Endothelial cell of umbilical vein (primary cell): ENCODE measurements at regions of chr2 and their contacts with region 1.

Region 1: GRCh38 chr2:120949027-120949956 is 213.6 kb downstream of the GLI2 start:
- DNase-seq: peak; percentile 21
- H3K4me3 ChIP-seq: no peak overlapping the region
- H3K27ac ChIP-seq: no peak overlapping the region
- H3K4me1 ChIP-seq: no peaks in the 10 kb centered on the region
- H3K27me3 ChIP-seq: peaks cover 0 to 2% of the 10 kb centered on the region in 2 experiments
- CTCF ChIP-seq: peak; percentile 17 to 51
- POLR2A ChIP-seq: no peak

Region 2: GRCh38 chr2:120735746-120736170 is 213.5 kb before region 1 on chr2 and contains the start of gene GLI2:
- CTCF ChIA-PET with region 1: no interaction called
- POLR2A ChIA-PET with region 1: no interaction called
- dilution Hi-C with region 1: no loop called
- intact Hi-C with region 1: loop called (anchors 1 kb)
- DNase-seq: peak; percentile 63
- H3K4me3 ChIP-seq: peak within 1 kb of the TSS in 1 of 3 experiments; percentile 8
- H3K27ac ChIP-seq: no peak within 1 kb of the TSS
- H3K4me1 ChIP-seq: no peaks in the 10 kb centered on the region
- H3K27me3 ChIP-seq: peaks cover 63 to 83% of the 10 kb centered on the region in 2 experiments
- CTCF ChIP-seq: peak; percentile 56 to 64
- POLR2A ChIP-seq: no peak
- total RNA-seq, gene GLI2: 0.13 and 0.51 TPM in 2 replicates

Region 3: GRCh38 chr2:120779781-120780283 is 169.5 kb before region 1 on chr2:
- CTCF ChIA-PET with region 1: no interaction called
- POLR2A ChIA-PET with region 1: no interaction called
- dilution Hi-C with region 1: no loop called
- intact Hi-C with region 1: loop called (anchors 5 kb)
- DNase-seq: no peak
- H3K4me3 ChIP-seq: no peak overlapping the region
- H3K27ac ChIP-seq: no peak overlapping the region
- H3K4me1 ChIP-seq: peaks cover 8% of the 10 kb centered on the region
- H3K27me3 ChIP-seq: peaks cover 0 to 2% of the 10 kb centered on the region in 2 experiments
- CTCF ChIP-seq: no peak
- POLR2A ChIP-seq: no peak

Region 4: GRCh38 chr2:120867290-120868241 is 81.7 kb before region 1 on chr2:
- CTCF ChIA-PET with region 1: no interaction called
- POLR2A ChIA-PET with region 1: no interaction called
- dilution Hi-C with region 1: no loop called
- intact Hi-C with region 1: loop called (anchors 5 kb)
- DNase-seq: peak; percentile 60
- H3K4me3 ChIP-seq: no peak overlapping the region
- H3K27ac ChIP-seq: no peak overlapping the region
- H3K4me1 ChIP-seq: peaks cover 5% of the 10 kb centered on the region
- H3K27me3 ChIP-seq: peaks cover 4 to 10% of the 10 kb centered on the region in 2 experiments
- CTCF ChIP-seq: no peak
- POLR2A ChIP-seq: no peak

Region 5: DNA sequence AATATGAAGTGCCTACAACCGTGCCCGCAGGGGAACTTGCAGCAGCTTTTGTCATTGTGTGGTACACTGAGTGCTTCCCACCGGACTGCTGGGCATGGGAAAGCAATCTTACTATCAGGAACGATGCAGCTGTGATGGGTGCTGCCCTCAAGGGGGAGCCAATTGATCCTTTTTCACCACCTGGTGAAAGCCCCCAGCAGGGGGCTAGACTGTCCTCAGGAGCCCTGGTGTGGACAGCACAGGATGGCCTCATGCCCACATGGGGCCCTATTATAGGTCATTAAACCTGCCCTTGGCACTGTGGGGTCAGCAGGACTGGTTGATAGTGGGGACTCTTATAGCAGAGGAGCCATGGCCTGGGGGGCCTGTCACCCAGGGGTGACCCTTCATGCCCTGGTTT is 41.5 kb before region 1 on chr2:
- CTCF ChIA-PET with region 1: interaction called, 4 read pairs
- POLR2A ChIA-PET with region 1: no interaction called
- dilution Hi-C with region 1: no loop called
- intact Hi-C with region 1: loop called (anchors 2 kb)
- DNase-seq: no peak
- H3K4me3 ChIP-seq: no peak overlapping the region
- H3K27ac ChIP-seq: no peak overlapping the region
- H3K4me1 ChIP-seq: no peaks in the 10 kb centered on the region
- H3K27me3 ChIP-seq: peaks cover 13 to 61% of the 10 kb centered on the region in 2 experiments
- CTCF ChIP-seq: peak in 1 of 2 donors; percentile 23
- POLR2A ChIP-seq: no peak